Endothelial cell of umbilical vein (primary cell): ENCODE measurements at regions of chr7 and their contacts with region 1.

Region 1: GRCh38 chr7:22110227-22110839 is 164.6 kb upstream of the CDCA7L start:
- DNase-seq: peak; percentile 93
- H3K4me3 ChIP-seq: no peak overlapping the region
- H3K27ac ChIP-seq: peak overlapping the region; percentile 24
- H3K4me1 ChIP-seq: peaks cover 15% of the 10 kb centered on the region
- H3K27me3 ChIP-seq: no peaks in the 10 kb centered on the region
- CTCF ChIP-seq: peak; percentile 65 to 77
- POLR2A ChIP-seq: no peak

Region 2: GRCh38 chr7:22008087-22008486 is 102.2 kb before region 1 on chr7:
- CTCF ChIA-PET with region 1: no interaction called
- POLR2A ChIA-PET with region 1: no interaction called
- dilution Hi-C with region 1: no loop called
- intact Hi-C with region 1: no loop called
- DNase-seq: no peak
- H3K4me3 ChIP-seq: no peak overlapping the region
- H3K27ac ChIP-seq: no peak overlapping the region
- H3K4me1 ChIP-seq: no peaks in the 10 kb centered on the region
- H3K27me3 ChIP-seq: peaks cover 0 to 1% of the 10 kb centered on the region in 2 experiments
- CTCF ChIP-seq: no peak
- POLR2A ChIP-seq: no peak

Region 3: GRCh38 chr7:22121702-22122474 is 11.6 kb after region 1 on chr7:
- CTCF ChIA-PET with region 1: interaction called, 25 read pairs
- POLR2A ChIA-PET with region 1: no interaction called
- dilution Hi-C with region 1: no loop called
- intact Hi-C with region 1: loop called (anchors 1 kb)
- DNase-seq: peak; percentile 96
- H3K4me3 ChIP-seq: no peak overlapping the region
- H3K27ac ChIP-seq: peak overlapping the region; percentile 87
- H3K4me1 ChIP-seq: peaks cover 50% of the 10 kb centered on the region
- H3K27me3 ChIP-seq: no peaks in the 10 kb centered on the region
- CTCF ChIP-seq: no peak
- POLR2A ChIP-seq: peak; percentile 29

Region 4: DNA sequence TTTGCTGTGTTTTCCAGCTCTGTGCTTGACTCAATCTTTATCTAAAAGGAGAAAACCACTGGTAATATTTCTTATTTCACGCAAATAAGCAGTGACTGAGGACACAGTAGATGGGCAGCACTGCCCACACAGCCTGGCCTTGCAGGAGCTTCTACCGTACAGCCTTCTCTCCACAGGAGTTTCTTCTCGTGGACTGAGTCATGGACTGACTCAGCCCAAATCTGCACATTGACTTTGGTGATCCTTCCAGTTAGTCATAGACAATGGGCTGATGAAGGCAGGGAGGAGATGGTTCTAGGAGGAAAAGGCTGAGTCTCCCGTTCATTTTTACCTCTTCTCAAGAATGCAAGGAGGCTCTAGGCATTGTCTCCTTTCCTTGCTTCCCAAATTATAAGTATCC is 45.9 kb after region 1 on chr7:
- CTCF ChIA-PET with region 1: interaction called, 8 read pairs
- POLR2A ChIA-PET with region 1: no interaction called
- dilution Hi-C with region 1: no loop called
- intact Hi-C with region 1: loop called (anchors 2 kb)
- DNase-seq: peak; percentile 74
- H3K4me3 ChIP-seq: no peak overlapping the region
- H3K27ac ChIP-seq: peak overlapping the region; percentile 3
- H3K4me1 ChIP-seq: peaks cover 9% of the 10 kb centered on the region
- H3K27me3 ChIP-seq: no peaks in the 10 kb centered on the region
- CTCF ChIP-seq: no peak
- POLR2A ChIP-seq: no peak

Region 5: DNA sequence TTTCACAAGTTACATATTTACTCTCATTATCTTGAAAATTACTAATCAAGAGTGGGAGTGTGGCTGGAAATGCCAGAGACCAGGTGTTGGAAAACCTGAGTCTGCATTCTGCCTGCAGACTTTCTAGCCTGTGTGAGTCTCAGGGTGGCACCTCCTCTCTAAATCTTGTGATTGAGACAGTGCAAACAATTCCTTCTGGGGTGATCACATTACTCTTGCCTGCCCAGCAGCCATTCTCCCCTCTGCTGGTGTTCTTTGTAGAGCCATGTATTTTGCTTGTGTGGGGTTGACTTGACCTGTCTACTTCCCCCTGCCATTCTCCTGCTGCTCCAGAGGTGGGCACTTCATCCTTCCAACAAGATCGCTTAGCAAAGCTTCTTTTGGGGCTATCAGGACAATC is 145.5 kb after region 1 on chr7:
- CTCF ChIA-PET with region 1: interaction called, 20 read pairs
- POLR2A ChIA-PET with region 1: no interaction called
- dilution Hi-C with region 1: no loop called
- intact Hi-C with region 1: loop called (anchors 2 kb)
- DNase-seq: no peak
- H3K4me3 ChIP-seq: no peak overlapping the region
- H3K27ac ChIP-seq: no peak overlapping the region
- H3K4me1 ChIP-seq: no peaks in the 10 kb centered on the region
- H3K27me3 ChIP-seq: no peaks in the 10 kb centered on the region
- CTCF ChIP-seq: no peak
- POLR2A ChIP-seq: no peak

Region 6: GRCh38 chr7:22356701-22357353 is 246.5 kb after region 1 on chr7 and contains the start of gene RAPGEF5:
- CTCF ChIA-PET with region 1: interaction called, 4 read pairs
- POLR2A ChIA-PET with region 1: no interaction called
- dilution Hi-C with region 1: no loop called
- intact Hi-C with region 1: loop called (anchors 5 kb)
- DNase-seq: no peak
- H3K4me3 ChIP-seq: peak within 1 kb of the TSS in 2 of 3 experiments; percentile 26 to 52
- H3K27ac ChIP-seq: no peak within 1 kb of the TSS
- H3K4me1 ChIP-seq: peaks cover 3% of the 10 kb centered on the region
- H3K27me3 ChIP-seq: no peaks in the 10 kb centered on the region
- CTCF ChIP-seq: no peak
- POLR2A ChIP-seq: no peak
- total RNA-seq, gene RAPGEF5: 43.2 and 43.3 TPM in 2 replicates

Region 7: GRCh38 chr7:22481726-22482125 is 371.4 kb after region 1 on chr7:
- CTCF ChIA-PET with region 1: interaction called, 81 read pairs
- POLR2A ChIA-PET with region 1: no interaction called
- dilution Hi-C with region 1: no loop called
- intact Hi-C with region 1: no loop called
- DNase-seq: peak; percentile 79
- H3K4me3 ChIP-seq: no peak overlapping the region
- H3K27ac ChIP-seq: peak overlapping the region; percentile 84
- H3K4me1 ChIP-seq: peaks cover 56% of the 10 kb centered on the region
- H3K27me3 ChIP-seq: no peaks in the 10 kb centered on the region
- CTCF ChIP-seq: no peak
- POLR2A ChIP-seq: no peak